OCI-LY7 (cell line): ENCODE measurements at regions of chr6 and their contacts with region 1.

Region 1: GRCh38 chr6:146968041-146968760 is 236.0 kb upstream of the STXBP5 start:
- DNase-seq: no peak
- H3K4me3 ChIP-seq: no peak overlapping the region
- H3K27ac ChIP-seq: no peak overlapping the region
- H3K4me1 ChIP-seq: no peaks in the 10 kb centered on the region
- CTCF ChIP-seq: no peak

Region 2: DNA sequence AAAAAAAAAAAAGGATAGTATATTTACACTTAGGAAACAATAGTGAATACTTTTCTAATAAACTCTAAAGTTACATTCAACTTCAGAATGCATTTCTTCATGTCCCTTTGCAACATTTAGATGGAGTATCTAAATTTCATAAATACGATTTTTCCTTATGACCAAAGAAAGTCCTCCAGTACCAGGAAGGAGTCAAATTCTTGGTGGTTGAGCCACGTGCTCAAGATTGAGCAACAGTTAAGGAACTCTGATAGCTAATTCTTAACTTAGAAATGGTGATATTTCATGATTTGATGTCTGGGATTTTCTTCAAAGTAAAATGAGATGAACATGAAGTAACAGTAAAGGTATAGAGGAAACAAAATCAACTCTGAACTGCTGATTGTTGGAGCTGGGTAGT is 1467.2 kb after region 1 on chr6:
- CTCF ChIA-PET with region 1: no interaction called
- POLR2A ChIA-PET with region 1: interaction called, 12 read pairs
- intact Hi-C with region 1: no loop called
- DNase-seq: no peak
- H3K4me3 ChIP-seq: no peak overlapping the region
- H3K27ac ChIP-seq: no peak overlapping the region
- H3K4me1 ChIP-seq: no peaks in the 10 kb centered on the region
- CTCF ChIP-seq: no peak